H1 (cell line): ENCODE measurements at regions of chr2 and their contacts with region 1.

Region 1: DNA sequence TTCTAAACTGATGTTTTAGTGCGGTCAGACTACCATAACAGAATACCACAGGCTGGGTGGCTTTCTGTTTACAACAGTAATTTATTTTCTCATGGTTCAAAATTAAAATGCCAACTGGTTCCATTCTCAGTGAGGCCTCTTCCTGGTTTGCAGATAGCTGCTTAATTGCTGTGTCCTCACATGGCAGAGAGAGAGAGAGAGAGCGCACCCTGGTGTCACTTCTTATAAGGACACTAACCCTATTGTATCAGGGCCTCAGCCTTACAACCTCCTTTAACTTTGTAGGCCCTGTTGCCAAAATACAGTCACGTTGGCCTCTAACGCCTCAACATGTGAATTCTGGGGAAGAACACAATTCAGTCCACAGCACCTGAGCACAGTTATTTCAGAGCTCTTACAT is 37.5 kb upstream of the ZNF385B start:
- DNase-seq: peak; percentile 27 to 77
- H3K4me3 ChIP-seq: no peak overlapping the region
- H3K27ac ChIP-seq: no peak overlapping the region
- H3K4me1 ChIP-seq: peaks cover 0 to 3% (median 0%) of the 10 kb centered on the region in 4 experiments; a peak in 1 of 7 replicates
- H3K27me3 ChIP-seq: no peaks in the 10 kb centered on the region
- CTCF ChIP-seq: peak; percentile 2 to 81 (median 69)
- EP300 ChIP-seq: peak in 1 of 2 experiments; percentile 28; a peak in 1 of 3 replicates
- POLR2A ChIP-seq: no peak
- RAD21 ChIP-seq: peak; percentile 79 to 84

Region 2: GRCh38 chr2:179842498-179843153 is 56.2 kb before region 1 on chr2:
- CTCF ChIA-PET with region 1: interaction called, 24 read pairs
- POLR2A ChIA-PET with region 1: no interaction called
- DNase-seq: peak in 1 of 2 experiments; percentile 53
- H3K4me3 ChIP-seq: no peak overlapping the region
- H3K27ac ChIP-seq: no peak overlapping the region
- H3K4me1 ChIP-seq: peaks cover 0 to 3% (median 1%) of the 10 kb centered on the region in 4 experiments; a peak in 3 of 7 replicates
- H3K27me3 ChIP-seq: no peaks in the 10 kb centered on the region
- CTCF ChIP-seq: peak; percentile 59 to 74 (median 62)
- EP300 ChIP-seq: no peak
- POLR2A ChIP-seq: no peak
- RAD21 ChIP-seq: peak; percentile 84 to 85

Region 3: GRCh38 chr2:179861416-179862067 is 37.3 kb before region 1 on chr2 and contains the start of gene ZNF385B:
- CTCF ChIA-PET with region 1: interaction called, 14 read pairs
- POLR2A ChIA-PET with region 1: interaction called, 3 read pairs
- DNase-seq: peak in 1 of 2 experiments; percentile 15
- H3K4me3 ChIP-seq: peak within 1 kb of the TSS; percentile 76 to 84 (median 80)
- H3K27ac ChIP-seq: no peak within 1 kb of the TSS
- H3K4me1 ChIP-seq: peaks cover 0 to 7% (median 2%) of the 10 kb centered on the region in 4 experiments; a peak in 5 of 7 replicates
- H3K27me3 ChIP-seq: peaks cover 6 to 37% (median 18%) of the 10 kb centered on the region in 4 experiments
- CTCF ChIP-seq: no peak
- EP300 ChIP-seq: no peak
- POLR2A ChIP-seq: no peak
- RAD21 ChIP-seq: no peak
- total RNA-seq, gene ZNF385B: 2.9 and 3.7 TPM in 2 replicates

Region 4: GRCh38 chr2:179884193-179884592 is 14.7 kb before region 1 on chr2:
- CTCF ChIA-PET with region 1: interaction called, 21 read pairs
- POLR2A ChIA-PET with region 1: no interaction called
- DNase-seq: no peak
- H3K4me3 ChIP-seq: no peak overlapping the region
- H3K27ac ChIP-seq: no peak overlapping the region
- H3K4me1 ChIP-seq: peaks cover 0 to 5% (median 2%) of the 10 kb centered on the region in 4 experiments; a peak in 2 of 7 replicates
- H3K27me3 ChIP-seq: no peaks in the 10 kb centered on the region
- CTCF ChIP-seq: no peak
- EP300 ChIP-seq: no peak
- POLR2A ChIP-seq: no peak
- RAD21 ChIP-seq: no peak

Region 5: GRCh38 chr2:179917272-179917671 is 18.4 kb after region 1 on chr2:
- CTCF ChIA-PET with region 1: interaction called, 11 read pairs
- POLR2A ChIA-PET with region 1: no interaction called
- DNase-seq: no peak
- H3K4me3 ChIP-seq: no peak overlapping the region
- H3K27ac ChIP-seq: no peak overlapping the region
- H3K4me1 ChIP-seq: no peaks in the 10 kb centered on the region
- H3K27me3 ChIP-seq: no peaks in the 10 kb centered on the region
- CTCF ChIP-seq: no peak
- EP300 ChIP-seq: no peak
- POLR2A ChIP-seq: no peak
- RAD21 ChIP-seq: no peak